ENCODE measurements at regions of chr2 and their contacts with region 1.

Region 1: GRCh38 chr2:20242060-20243006 is 17.4 kb upstream of the SDC1 start:
- DNase-seq: peak; percentile 80
- H3K4me3 Mint-ChIP-seq: peak overlapping the region; percentile 37
- H3K27ac Mint-ChIP-seq: no peak overlapping the region
- H3K4me1 Mint-ChIP-seq: peaks cover 3% of the 10 kb centered on the region
- H3K27me3 Mint-ChIP-seq: peaks cover 14% of the 10 kb centered on the region

Region 2: DNA sequence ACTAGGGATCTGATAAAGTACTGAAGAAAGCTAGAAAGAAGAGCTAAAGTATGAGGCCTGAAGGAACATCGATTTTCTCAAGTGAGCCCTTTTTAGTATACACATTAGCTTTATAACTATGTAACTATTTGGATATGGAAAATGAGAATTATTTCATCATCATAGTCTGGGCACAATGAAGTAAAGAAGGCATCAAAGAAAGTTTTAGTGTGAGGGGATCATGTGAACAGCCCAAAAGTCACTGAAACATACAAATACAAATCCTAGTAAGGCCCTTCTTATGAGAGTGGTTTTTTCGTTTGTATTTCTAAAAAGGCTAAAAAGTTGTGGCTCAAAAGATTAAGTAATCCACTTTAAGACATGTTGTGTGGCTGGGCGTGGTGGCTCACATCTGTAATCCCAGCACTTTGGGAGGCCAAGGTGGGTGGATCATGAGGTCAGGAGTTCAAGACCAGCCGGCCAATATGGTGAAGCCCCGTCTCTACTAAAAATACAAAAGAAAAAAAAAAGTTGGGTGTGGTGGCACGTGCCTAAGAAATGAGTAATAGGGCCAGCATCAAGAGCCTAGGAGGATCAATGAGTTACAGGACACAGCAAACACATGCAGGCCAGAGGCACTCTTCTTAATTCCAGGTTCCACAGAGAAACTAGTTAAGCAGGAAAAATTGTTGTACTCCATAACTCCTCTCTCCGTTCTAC is 46.5 kb after region 1 on chr2:
- intact Hi-C with region 1: loop called (anchors 5 kb)
- DNase-seq: no peak
- H3K4me3 Mint-ChIP-seq: no peak overlapping the region
- H3K27ac Mint-ChIP-seq: no peak overlapping the region
- H3K4me1 Mint-ChIP-seq: peaks cover 10% of the 10 kb centered on the region
- H3K27me3 Mint-ChIP-seq: no peaks in the 10 kb centered on the region

Region 3: DNA sequence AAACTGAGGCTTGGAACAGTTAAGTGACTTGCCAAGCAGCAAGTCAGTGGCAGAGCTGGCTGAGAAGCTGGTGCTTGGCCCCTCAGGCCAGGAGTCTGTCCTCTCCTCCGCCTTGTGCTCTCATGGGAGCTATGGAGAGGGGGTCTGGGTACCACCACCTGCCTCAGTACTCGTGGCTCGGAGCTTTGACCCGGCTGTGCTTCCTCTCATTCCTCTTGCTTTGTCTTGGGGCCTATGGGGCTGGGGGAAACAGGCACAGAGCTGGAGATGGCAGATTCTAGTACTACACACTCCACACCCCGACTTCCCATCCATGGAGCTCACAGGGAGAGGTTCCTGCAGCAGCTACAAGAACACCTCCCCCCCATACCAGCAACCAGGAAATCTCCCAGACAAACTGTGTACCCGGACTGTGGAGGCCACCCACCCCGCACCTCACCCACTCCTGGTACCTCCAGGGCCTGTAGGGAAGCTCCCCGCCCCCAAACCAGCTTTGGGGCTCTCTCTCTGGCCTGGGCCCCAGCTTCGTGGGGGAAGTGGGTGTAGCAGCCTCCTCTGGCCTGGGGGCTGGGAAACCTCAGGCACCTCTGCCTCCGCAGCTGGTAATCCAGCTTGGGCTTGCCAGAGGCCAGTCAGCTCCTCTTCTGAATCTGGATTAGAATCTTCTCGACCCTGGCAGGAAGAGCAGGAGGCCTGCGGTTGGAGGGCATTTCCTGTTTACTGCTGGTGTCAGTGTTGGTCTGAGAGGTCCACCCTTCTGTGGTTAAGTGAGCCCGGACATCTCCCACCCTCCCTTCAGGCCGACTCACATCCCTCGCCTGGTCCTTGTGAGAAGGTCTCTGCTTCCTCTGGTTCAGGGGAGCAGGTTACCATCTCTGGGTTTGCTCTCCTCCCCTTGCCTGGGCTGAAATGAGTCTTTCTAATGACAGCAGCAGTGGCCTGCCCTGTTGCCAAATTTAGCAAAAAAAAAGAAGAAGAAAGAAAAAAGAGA is 182.3 kb after region 1 on chr2:
- intact Hi-C with region 1: loop called (anchors 5 kb)
- DNase-seq: peak; percentile 75
- H3K4me3 Mint-ChIP-seq: peak overlapping the region; percentile 7
- H3K27ac Mint-ChIP-seq: peak overlapping the region; percentile 76
- H3K4me1 Mint-ChIP-seq: peaks cover 30% of the 10 kb centered on the region
- H3K27me3 Mint-ChIP-seq: peaks cover 4% of the 10 kb centered on the region

Region 4: GRCh38 chr2:20650880-20651730 is 408.8 kb after region 1 on chr2 and contains the start of gene HS1BP3:
- intact Hi-C with region 1: loop called (anchors 5 kb)
- DNase-seq: peak; percentile 98
- H3K4me3 Mint-ChIP-seq: peak within 1 kb of the TSS; percentile 85
- H3K27ac Mint-ChIP-seq: peak within 1 kb of the TSS; percentile 89
- H3K4me1 Mint-ChIP-seq: peaks cover 29% of the 10 kb centered on the region
- H3K27me3 Mint-ChIP-seq: peaks cover 11% of the 10 kb centered on the region
- total RNA-seq, gene HS1BP3: 7.1 and 8.9 TPM in 2 replicates

Measured in activated CD4-positive, alpha-beta T cell treated with anti-CD3 and anti-CD28 coated beads, Interleukin-2, amount 10 ng/mL, durations not matched to agents 24 days and 14 days (primary cell).